HEK293 (cell line): ENCODE measurements at regions of chr12 and their contacts with region 1.

Region 1: DNA sequence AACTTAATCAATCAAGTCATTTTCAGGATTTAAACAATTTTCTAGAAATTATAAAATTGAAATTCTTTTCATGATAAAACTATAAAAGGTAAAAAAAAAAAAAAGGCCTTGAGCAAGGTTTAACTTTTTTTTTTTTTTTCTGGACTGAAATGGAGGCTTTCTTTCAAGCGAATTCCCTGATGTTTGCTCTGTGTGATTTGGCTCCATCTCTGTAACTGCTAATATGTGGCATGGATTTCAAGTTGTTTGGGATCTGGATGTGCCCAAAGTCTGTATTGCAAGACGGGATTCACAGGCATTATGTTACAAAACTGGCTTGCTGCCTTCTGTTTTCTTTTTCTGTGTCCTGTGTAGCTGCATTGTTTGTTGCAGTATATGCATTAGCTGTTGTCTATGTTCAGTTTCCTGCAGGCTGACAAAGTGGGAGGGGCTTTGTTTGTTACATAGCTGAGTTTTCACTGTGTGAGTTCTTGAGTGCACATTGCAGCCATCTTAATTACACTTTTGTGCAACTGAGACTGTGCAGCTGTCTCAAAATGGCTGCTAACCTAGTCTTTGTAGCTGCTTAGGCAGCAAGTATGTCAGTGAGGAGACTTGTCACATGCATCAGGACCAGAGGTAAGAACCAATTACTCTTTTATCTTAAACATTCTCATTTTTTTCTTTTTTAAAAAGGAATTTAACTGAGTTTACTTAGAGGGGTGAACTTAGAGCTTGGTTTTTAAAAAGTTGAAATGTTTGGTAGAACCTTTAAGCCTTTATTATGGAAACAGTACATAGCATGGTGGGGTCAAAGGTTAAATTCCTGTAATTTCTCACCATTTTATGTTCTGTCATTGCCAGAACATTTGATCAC is 19.5 kb downstream of the ATF7IP start:
- H3K4me3 ChIP-seq: peak overlapping the region; percentile 31
- H3K27ac ChIP-seq: peak overlapping the region; percentile 50
- H3K4me1 ChIP-seq: peaks cover 7% of the 10 kb centered on the region; the same call in 1 of the 2 replicates
- CTCF ChIP-seq: no peak

Region 2: DNA sequence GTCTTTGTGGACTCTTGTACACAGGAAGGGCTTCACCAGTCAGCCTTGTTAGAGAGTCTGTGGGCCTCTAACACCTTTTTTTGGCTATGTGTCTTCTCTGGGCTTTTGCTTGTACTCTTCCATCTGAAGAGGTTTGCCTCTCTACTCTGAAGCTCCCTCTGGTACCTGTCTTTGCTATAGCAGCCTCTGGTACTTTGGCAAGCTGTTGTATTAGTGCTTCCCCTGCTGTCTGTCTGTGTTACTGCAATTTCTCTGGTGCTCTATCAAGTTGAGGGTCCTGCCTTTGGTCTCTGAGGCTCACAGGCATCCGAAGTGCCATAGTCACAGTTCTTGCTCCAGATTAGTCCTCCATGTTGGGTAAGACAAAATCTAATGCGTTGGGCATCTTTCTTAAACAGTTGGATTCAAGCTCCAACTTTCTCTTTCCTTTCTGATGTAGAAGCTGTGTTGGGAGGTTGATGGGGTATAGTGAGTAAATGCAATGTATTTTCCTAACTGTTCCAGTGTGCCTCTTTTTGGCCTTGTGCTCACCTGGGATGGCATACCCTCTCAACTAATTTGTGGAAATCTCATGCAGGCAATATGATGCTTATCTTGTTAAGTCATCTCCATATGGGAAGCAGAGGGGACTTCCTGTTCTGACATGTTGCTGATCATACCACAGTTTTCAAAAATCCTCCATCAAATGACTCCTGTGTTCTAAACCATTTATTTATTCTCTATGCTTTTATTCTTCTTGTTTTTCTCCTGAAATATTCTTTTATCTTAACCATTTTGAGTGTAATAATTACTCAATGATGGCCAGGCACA is 69.3 kb after region 1 on chr12:
- CTCF ChIA-PET with region 1: interaction called, 12 read pairs
- POLR2A ChIA-PET with region 1: no interaction called
- H3K4me3 ChIP-seq: no peak overlapping the region
- H3K27ac ChIP-seq: no peak overlapping the region
- H3K4me1 ChIP-seq: no peaks in the 10 kb centered on the region
- CTCF ChIP-seq: no peak